Activated CD4-positive, alpha-beta T cell treated with anti-CD3 and anti-CD28 coated beads, Interleukin-2, amount 10 ng/mL, durations not matched to agents 24 days and 14 days (primary cell): ENCODE measurements at regions of chr6 and their contacts with region 1.

Region 1: GRCh38 chr6:116570856-116571682 is at the start of gene RWDD1:
- DNase-seq: peak; percentile 99
- H3K4me3 Mint-ChIP-seq: peak within 1 kb of the TSS; percentile 95
- H3K27ac Mint-ChIP-seq: peak within 1 kb of the TSS; percentile 96
- H3K4me1 Mint-ChIP-seq: peaks cover 25% of the 10 kb centered on the region
- H3K27me3 Mint-ChIP-seq: peaks cover 1% of the 10 kb centered on the region
- total RNA-seq, gene RWDD1: 44.4 and 46.8 TPM in 2 replicates

Region 2: GRCh38 chr6:114997813-114998292 is 1573.2 kb before region 1 on chr6:
- intact Hi-C with region 1: loop called (anchors 10 kb)
- DNase-seq: no peak
- H3K4me3 Mint-ChIP-seq: no peak overlapping the region
- H3K27ac Mint-ChIP-seq: peak overlapping the region; percentile 78
- H3K4me1 Mint-ChIP-seq: peaks cover 5% of the 10 kb centered on the region
- H3K27me3 Mint-ChIP-seq: no peaks in the 10 kb centered on the region

Region 3: GRCh38 chr6:116253505-116254296 is 317.4 kb before region 1 on chr6 and contains the start of gene TSPYL4:
- intact Hi-C with region 1: loop called (anchors 1 kb)
- DNase-seq: peak; percentile 98
- H3K4me3 Mint-ChIP-seq: no peak within 1 kb of the TSS
- H3K27ac Mint-ChIP-seq: no peak within 1 kb of the TSS
- H3K4me1 Mint-ChIP-seq: peaks cover 25% of the 10 kb centered on the region
- H3K27me3 Mint-ChIP-seq: no peaks in the 10 kb centered on the region
- total RNA-seq, gene TSPYL4: 22.1 and 22.2 TPM in 2 replicates

Region 4: GRCh38 chr6:116461932-116462885 is 108.9 kb before region 1 on chr6:
- intact Hi-C with region 1: loop called (anchors 5 kb)
- DNase-seq: peak; percentile 91
- H3K4me3 Mint-ChIP-seq: peak overlapping the region; percentile 75
- H3K27ac Mint-ChIP-seq: peak overlapping the region; percentile 85
- H3K4me1 Mint-ChIP-seq: peaks cover 76% of the 10 kb centered on the region
- H3K27me3 Mint-ChIP-seq: no peaks in the 10 kb centered on the region

Region 5: DNA sequence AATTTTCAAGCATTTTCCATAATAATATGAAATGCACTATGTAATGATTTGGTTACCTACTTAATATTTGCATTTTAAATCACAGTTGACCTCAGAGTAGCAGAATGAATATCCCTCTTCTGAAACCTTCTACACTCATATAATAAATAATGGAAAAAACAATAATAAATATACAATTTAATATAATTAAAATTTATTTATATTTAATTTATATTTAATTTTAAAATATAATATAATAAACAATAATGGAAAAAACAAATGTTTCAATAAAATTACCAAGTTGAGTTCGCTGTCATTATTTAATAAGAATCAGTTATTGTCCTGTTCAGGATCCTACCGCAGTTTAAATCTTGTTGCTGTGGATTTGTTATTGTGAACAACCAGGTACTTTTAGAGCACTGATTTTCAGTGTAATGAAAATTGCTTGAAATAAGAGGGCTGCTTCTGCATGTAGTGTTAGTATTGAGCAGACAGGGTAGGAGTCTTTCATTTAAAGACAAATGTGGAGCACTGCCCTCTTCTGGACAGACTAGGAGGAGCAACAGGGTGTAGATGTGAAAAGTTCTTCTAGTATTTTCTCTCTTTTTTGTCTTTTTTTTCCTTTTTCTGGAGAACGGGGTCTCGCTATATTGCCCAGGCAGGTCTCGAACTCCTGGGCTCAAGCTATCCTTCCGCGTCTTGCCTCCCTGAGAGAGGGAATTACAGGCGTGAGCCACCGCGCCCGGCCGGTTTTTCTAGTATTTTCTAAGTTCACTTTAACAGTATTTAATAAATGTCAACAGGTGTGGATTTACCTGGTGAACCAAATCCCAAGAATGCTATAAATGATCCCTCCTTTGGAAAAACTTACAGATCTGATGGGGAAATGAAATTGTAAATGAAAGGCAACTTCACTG is 39.1 kb before region 1 on chr6:
- intact Hi-C with region 1: no loop called
- DNase-seq: peak; percentile 91
- H3K4me3 Mint-ChIP-seq: no peak overlapping the region
- H3K27ac Mint-ChIP-seq: no peak overlapping the region
- H3K4me1 Mint-ChIP-seq: peaks cover 2% of the 10 kb centered on the region
- H3K27me3 Mint-ChIP-seq: peaks cover 59% of the 10 kb centered on the region

Region 6: DNA sequence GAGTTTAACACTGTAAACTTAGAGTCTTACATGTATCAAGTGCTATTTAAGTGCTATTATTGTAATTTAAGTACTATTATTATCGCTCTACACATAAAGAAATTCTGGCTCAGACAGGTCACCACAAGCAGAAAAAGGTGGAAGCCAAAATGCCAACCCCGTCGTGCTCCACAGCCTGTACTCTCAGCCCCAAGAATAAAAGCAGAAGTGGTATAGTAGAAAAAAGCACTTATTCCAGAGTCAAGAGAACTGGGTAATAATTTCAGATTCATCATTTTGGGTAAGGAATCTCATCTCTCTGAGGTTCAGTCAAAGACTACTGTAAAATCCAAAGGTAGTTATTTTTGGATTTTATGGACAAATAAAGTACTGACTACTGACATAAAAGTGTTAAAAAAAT is 96.6 kb after region 1 on chr6:
- intact Hi-C with region 1: loop called (anchors 1 kb)
- DNase-seq: no peak
- H3K4me3 Mint-ChIP-seq: peak overlapping the region; percentile 94
- H3K27ac Mint-ChIP-seq: peak overlapping the region; percentile 98
- H3K4me1 Mint-ChIP-seq: peaks cover 32% of the 10 kb centered on the region
- H3K27me3 Mint-ChIP-seq: peaks cover 19% of the 10 kb centered on the region

Region 7: DNA sequence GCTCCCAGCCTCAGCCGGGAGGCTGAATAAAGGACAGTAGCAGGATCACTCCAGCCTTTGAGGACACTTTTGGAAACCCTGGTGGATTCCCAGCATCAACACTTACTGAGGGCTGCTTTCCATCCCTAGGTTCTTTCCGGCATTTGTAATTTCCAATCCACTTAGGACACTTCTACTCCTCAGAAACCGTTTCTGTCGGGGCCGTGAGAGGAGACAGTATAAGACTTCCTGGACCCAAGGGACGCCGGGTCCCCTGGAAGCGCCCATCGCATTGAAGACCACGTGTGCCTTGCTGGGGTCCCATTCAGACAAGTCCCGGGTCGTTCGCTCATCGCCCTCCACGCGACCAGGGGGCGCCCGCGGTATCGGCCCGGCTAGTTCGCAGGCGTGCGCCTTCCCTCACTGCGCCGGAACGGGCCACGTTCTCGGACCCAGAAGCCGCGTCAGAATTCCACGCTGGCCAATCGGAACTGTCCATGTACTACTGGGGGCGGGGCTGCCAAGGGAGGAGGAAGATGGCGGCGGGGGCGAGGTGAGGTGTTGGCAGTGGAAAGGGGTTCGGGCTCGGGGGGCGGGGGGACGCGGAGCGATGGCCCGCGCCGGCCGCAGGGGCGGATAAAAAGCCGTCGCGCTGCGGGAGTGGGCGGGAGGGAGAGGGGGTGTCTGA is 1104.1 kb after region 1 on chr6 and contains the start of gene NUS1:
- intact Hi-C with region 1: loop called (anchors 5 kb)
- DNase-seq: peak; percentile 99
- H3K4me3 Mint-ChIP-seq: peak within 1 kb of the TSS; percentile 89
- H3K27ac Mint-ChIP-seq: peak within 1 kb of the TSS; percentile 93
- H3K4me1 Mint-ChIP-seq: peaks cover 45% of the 10 kb centered on the region
- H3K27me3 Mint-ChIP-seq: no peaks in the 10 kb centered on the region
- total RNA-seq, gene NUS1: 49.6 and 49.7 TPM in 2 replicates